ENCODE measurements at regions of chr11 and their contacts with region 1.

Region 1: DNA sequence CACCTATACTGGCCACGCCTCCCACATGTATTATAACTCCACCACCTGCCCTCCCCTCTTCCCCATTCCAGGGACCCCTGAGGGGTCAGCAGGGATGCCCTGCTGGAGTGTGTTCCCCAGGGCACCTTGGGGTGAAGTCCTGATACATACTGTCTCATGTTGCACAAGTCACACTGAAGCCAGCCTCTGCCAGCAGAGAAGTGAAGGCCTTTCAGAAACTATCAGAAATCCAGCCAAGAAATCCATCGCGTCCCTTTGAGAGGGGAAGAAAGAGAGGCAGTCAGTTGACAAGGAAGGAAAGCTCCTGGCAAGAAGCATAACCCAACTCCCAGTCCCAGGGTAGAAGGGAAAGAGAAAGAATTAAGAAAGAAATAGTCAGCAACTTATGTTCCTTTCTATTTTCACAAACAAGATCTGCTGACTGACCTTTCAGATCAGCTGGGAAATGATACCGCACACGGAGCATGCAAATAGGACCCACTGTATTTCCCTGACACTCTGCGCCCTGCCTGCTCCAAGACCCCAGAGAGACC is 45.2 kb downstream of the SC5D start:
- DNase-seq: no peak
- H3K4me3 Mint-ChIP-seq: no peak overlapping the region
- H3K27ac Mint-ChIP-seq: no peak overlapping the region
- H3K4me1 Mint-ChIP-seq: peaks cover 35% of the 10 kb centered on the region
- H3K27me3 Mint-ChIP-seq: no peaks in the 10 kb centered on the region

Region 2: DNA sequence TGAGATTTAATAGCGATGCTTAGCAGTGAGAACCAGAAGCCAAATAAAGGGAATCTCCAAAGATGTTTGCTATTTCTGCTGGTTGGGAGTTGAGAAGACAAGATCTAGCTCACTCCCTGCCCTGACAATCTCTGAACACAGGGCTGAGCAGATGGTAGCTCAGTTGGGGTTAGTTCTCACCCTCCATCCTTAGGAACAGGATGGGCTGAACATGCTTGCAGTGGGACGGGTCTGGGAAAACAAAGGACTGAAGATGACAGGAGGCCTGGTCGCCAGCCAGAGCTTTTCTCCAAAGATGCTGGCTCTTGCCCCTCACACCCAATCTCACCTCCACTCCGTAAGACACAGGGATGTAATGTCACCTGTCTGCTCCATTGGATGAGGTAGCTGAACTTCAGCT is 27.5 kb after region 1 on chr11:
- CTCF ChIA-PET with region 1: no interaction called
- POLR2A ChIA-PET with region 1: no interaction called
- intact Hi-C with region 1: no loop called
- DNase-seq: no peak
- H3K4me3 Mint-ChIP-seq: no peak overlapping the region
- H3K27ac Mint-ChIP-seq: no peak overlapping the region
- H3K4me1 Mint-ChIP-seq: peaks cover 30% of the 10 kb centered on the region
- H3K27me3 Mint-ChIP-seq: no peaks in the 10 kb centered on the region

Region 3: DNA sequence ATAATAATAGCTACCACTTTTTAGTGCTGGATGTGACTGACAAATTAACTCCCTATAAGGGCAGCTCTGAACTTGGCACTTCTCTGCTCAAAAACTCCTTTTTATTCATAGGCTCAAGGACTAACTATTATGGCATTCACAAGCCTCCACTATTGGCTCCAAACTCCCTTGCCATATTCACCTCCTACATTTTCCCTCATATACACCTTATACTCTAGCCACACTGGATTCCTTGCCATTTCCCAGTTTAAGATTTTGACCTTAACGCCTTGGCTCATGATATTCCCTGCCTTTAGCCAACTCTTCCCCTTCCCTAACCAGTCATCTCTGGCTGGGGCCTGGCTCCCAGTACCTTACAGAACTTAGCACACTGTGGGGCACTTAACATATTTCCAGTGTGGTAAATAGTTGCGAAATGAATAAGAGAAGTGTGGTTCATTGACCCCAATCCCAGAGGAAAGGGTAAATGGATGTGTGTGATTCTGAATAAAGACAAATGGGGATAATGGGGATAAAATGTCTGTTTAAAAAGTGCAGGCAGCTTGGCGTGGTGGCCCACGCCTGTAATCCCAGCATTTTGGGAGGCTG is 74.3 kb after region 1 on chr11:
- CTCF ChIA-PET with region 1: no interaction called
- POLR2A ChIA-PET with region 1: no interaction called
- intact Hi-C with region 1: loop called (anchors 2 kb)
- DNase-seq: no peak
- H3K4me3 Mint-ChIP-seq: no peak overlapping the region
- H3K27ac Mint-ChIP-seq: no peak overlapping the region
- H3K4me1 Mint-ChIP-seq: peaks cover 38% of the 10 kb centered on the region
- H3K27me3 Mint-ChIP-seq: no peaks in the 10 kb centered on the region

Region 4: DNA sequence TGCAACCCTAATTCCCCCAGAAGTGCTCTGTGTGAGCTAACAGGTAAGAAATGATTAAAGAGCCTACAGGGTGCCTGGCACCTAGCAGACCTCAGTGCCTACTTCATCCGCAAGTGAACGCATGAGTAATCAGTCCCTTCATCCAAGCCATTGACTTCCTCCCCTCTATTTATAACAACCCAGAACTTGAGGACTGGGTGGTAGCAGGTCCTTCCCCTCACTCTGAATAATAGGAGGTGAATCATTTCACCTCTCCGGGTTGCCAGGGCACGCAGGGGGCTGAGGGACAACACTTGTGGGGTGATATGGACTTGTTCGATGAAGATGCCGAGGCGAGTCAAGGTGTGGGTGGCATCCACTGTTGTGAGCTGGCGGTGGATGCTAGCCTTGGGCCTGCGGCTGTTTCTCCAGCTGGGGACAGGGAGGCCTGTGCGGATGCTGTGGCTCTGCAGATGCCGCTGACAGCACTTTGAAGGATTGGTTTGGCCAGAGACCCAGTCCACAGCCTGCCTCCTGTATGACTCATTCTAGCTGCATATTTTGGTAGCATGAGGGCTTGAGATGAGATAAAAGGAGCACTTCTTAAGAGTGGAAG is 126.6 kb after region 1 on chr11:
- CTCF ChIA-PET with region 1: no interaction called
- POLR2A ChIA-PET with region 1: no interaction called
- intact Hi-C with region 1: no loop called
- DNase-seq: peak; percentile 94
- H3K4me3 Mint-ChIP-seq: peak overlapping the region; percentile 63
- H3K27ac Mint-ChIP-seq: peak overlapping the region; percentile 99
- H3K4me1 Mint-ChIP-seq: peaks cover 98% of the 10 kb centered on the region
- H3K27me3 Mint-ChIP-seq: no peaks in the 10 kb centered on the region

Measured in activated CD4-positive, alpha-beta memory T cell treated with anti-CD3 and anti-CD28 coated beads for 36 hours (primary cell).